Aorta (tissue), 5 donors: ENCODE measurements at regions of chr20 and their contacts with region 1.

Region 1: DNA sequence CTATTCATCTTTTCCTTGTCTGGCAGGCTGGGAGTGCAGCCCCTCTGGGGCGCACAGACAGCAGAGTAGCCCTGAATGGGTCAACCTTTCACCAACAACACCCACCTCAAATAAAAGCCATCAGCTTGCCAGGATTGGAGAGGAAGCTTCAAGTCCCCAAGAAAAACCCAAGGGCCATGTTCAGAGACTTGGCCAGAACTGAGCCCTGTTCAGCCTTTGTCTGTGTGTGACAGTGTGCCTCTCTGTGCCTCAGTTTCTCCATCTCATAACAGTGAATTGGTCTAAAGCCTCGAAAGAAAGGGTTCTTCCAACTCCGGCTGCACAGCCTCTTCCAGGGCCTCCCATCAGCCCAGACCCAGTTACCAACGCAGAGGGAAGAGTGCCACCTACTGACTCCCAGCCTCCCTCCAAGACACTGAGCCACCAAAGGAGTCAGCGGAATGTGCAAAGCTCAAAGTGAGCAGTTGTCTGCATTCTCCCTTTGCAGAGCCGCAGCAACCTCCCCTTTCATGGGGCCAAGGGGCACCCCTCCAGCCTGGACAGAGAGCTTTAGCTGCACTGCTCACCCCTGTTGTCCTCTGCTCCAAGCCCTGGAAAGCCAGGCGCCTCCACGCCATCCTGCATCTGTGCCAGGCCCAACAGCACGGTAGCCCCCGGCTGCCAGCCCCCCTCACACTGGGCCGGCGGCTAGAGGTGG is 82.7 kb upstream of the TOP1 start:
- DNase-seq: peak; percentile 75 to 82
- ATAC-seq: peak; percentile 83
- H3K4me3 ChIP-seq: no peak overlapping the region
- H3K27ac ChIP-seq: no peak overlapping the region
- H3K4me1 ChIP-seq: no peaks in the 10 kb centered on the region
- H3K27me3 ChIP-seq: no peaks in the 10 kb centered on the region

Region 2: GRCh38 chr20:40160097-40160550 is 785.8 kb before region 1 on chr20:
- intact Hi-C with region 1: loop called (anchors 5 to 10 kb)
- DNase-seq: peak in 1 of 2 donors; percentile 64
- ATAC-seq: peak; percentile 80
- H3K4me3 ChIP-seq: no peak overlapping the region
- H3K27ac ChIP-seq: no peak overlapping the region
- H3K4me1 ChIP-seq: no peaks in the 10 kb centered on the region
- H3K27me3 ChIP-seq: no peaks in the 10 kb centered on the region

Region 3: DNA sequence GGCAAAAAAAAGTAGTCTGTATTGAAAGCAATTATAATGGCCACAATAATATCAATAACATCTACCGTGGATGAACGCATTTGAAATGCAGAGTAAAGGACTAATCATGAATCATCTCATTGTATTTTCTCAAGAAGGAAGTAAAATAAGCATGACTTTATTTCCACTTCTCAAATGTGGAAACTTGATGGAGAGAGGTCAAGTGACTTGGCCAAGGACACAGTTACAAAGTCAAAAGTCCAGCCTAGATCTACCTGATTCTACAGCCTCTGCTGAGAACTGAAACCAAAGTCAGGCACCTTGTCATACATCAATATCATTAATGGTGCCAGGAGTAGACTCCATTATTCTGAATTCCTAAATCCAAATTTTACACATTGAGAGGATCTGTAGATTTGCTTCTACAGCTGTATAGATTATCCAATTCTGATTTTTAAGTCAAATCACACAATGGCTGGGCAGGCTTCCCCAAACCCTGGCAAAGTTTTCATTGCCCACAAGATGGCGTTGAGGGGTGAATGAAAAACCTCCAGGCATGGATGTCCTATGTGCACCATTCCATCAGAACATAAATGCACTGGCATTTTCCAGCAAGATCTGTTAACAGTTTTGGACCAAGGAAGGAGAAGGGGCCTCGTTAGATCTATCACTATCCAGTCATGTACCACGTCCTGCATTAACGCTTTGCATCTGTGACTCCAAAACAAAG is 679.9 kb before region 1 on chr20:
- intact Hi-C with region 1: loop called in 1 of 2 experiments (anchors 10 kb)
- DNase-seq: no peak
- ATAC-seq: peak; percentile 46
- H3K4me3 ChIP-seq: no peak overlapping the region
- H3K27ac ChIP-seq: no peak overlapping the region
- H3K4me1 ChIP-seq: no peaks in the 10 kb centered on the region
- H3K27me3 ChIP-seq: no peaks in the 10 kb centered on the region

Region 4: GRCh38 chr20:40741507-40742106 is 204.3 kb before region 1 on chr20:
- intact Hi-C with region 1: loop called (anchors 2 to 10 kb)
- DNase-seq: peak in 1 of 2 donors; percentile 71
- ATAC-seq: no peak
- H3K4me3 ChIP-seq: no peak overlapping the region
- H3K27ac ChIP-seq: no peak overlapping the region
- H3K4me1 ChIP-seq: no peaks in the 10 kb centered on the region
- H3K27me3 ChIP-seq: no peaks in the 10 kb centered on the region

Region 5: DNA sequence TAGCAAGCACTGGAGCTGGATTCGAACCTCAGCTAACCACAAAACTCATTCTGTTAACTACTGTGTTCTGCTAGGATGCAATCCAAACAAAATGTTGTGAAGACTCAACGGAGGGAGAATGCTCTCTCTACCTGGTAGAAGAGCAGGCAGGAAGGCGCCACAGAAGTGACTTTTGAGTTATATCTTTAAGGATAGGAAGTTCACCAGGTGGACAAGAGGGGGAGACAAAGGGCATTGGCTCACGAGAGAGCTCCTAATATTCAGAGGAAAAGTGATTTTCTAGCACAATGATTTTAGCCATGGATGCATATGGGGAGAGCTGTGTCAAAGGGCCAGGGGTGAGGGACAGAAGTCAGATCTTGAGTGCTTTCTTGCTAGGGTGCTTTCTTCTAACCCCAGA is 148.5 kb before region 1 on chr20:
- intact Hi-C with region 1: loop called in 1 of 2 experiments (anchors 5 kb)
- DNase-seq: no peak
- ATAC-seq: no peak
- H3K4me3 ChIP-seq: no peak overlapping the region
- H3K27ac ChIP-seq: no peak overlapping the region
- H3K4me1 ChIP-seq: no peaks in the 10 kb centered on the region
- H3K27me3 ChIP-seq: no peaks in the 10 kb centered on the region

Region 6: DNA sequence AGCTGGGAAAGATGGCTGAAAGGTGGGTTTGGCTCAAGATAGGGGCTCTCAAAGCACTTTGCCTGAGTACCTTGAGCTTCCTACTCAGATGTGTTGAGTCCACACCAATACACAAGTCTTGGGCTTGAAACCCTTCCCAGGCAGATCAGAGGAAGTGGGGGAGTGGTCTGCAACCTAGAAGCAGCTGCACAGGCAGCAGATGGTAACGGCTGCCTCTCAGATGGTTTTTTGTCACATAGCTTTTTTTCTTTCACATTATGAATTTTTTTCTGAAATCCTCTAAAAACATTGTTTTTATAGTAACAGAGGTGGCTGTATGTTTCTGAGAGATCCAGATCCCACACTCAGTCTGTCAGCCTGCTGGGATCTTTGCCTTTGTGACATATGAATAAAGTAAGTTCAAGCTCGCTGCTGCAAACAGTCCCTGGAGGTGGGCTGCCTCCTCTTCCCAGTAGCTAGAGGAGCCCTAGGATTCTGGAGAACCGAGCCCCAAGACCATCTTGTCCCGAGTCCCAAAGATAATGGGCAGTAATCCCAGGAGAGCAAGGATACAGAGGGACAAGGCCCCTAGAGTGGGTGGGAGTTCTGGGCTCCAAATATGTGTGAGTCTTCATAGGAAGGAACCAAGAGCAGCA is 14.4 kb before region 1 on chr20:
- intact Hi-C with region 1: no loop called
- DNase-seq: no peak
- ATAC-seq: no peak
- H3K4me3 ChIP-seq: no peak overlapping the region
- H3K27ac ChIP-seq: peak overlapping the region in 1 of 2 donors; percentile 15
- H3K4me1 ChIP-seq: no peaks in the 10 kb centered on the region
- H3K27me3 ChIP-seq: peaks cover 0 to 3% of the 10 kb centered on the region in 2 donors